Mammary epithelial cell (primary cell): ENCODE measurements at regions of chr1 and their contacts with region 1.

Region 1: DNA sequence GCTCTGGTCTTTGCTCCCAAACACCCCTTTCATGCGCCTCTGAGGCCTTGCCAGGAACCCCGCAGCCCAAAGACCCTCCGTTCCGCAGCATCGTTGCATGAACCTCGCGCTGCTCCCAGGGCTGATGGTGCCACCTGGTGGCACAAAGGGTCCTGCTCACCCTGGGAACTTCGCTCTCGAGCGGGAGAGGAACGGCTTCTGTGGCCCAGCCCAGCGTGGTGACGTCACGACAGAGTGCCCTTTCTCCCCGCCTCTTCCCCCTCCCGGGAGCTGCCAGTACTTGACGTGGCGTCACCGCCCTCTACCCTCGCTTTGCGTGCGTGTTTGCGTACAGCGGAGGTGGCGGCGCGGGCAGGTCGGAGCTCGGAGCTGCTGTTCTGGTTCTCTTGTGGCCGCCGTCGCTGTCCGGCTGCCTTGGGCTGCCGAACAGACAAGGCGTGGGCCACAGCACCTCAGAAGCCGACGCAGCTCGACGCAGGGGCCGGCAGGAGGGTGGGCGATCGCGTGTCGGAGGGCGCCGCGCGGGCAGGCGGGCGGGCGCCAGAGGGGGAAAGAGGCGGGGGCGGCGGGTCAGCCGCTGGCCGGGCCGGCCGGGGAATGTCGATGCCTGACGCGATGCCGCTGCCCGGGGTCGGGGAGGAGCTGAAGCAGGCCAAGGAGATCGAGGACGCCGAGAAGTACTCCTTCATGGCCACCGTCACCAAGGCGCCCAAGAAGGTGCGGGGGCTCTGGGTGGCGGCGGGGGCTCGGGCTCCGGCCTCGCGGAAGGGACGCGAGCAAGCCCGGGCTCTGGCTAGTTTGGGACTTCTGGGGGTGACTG is at the start of gene AHCYL1:
- DNase-seq: peak; percentile 97
- H3K4me3 ChIP-seq: peak within 1 kb of the TSS; percentile 78 to 84 (median 83)
- H3K27ac ChIP-seq: peak within 1 kb of the TSS; percentile 63
- H3K4me1 ChIP-seq: peaks cover 36% of the 10 kb centered on the region
- H3K27me3 ChIP-seq: no peaks in the 10 kb centered on the region
- CTCF ChIP-seq: peak; percentile 92 to 99
- total RNA-seq, gene AHCYL1: 71.2 to 72.2 TPM

Region 2: GRCh38 chr1:109643385-109644230 is 341.1 kb before region 1 on chr1:
- CTCF ChIA-PET with region 1: interaction called, 16 read pairs
- dilution Hi-C with region 1: no loop called
- in situ Hi-C with region 1: loop called in 1 of 2 experiments (anchors 25 kb)
- intact Hi-C with region 1: loop called (anchors 1 kb)
- DNase-seq: peak; percentile 51
- H3K4me3 ChIP-seq: no peak overlapping the region
- H3K27ac ChIP-seq: no peak overlapping the region
- H3K4me1 ChIP-seq: no peaks in the 10 kb centered on the region
- H3K27me3 ChIP-seq: no peaks in the 10 kb centered on the region
- CTCF ChIP-seq: peak; percentile 77 to 94

Region 3: DNA sequence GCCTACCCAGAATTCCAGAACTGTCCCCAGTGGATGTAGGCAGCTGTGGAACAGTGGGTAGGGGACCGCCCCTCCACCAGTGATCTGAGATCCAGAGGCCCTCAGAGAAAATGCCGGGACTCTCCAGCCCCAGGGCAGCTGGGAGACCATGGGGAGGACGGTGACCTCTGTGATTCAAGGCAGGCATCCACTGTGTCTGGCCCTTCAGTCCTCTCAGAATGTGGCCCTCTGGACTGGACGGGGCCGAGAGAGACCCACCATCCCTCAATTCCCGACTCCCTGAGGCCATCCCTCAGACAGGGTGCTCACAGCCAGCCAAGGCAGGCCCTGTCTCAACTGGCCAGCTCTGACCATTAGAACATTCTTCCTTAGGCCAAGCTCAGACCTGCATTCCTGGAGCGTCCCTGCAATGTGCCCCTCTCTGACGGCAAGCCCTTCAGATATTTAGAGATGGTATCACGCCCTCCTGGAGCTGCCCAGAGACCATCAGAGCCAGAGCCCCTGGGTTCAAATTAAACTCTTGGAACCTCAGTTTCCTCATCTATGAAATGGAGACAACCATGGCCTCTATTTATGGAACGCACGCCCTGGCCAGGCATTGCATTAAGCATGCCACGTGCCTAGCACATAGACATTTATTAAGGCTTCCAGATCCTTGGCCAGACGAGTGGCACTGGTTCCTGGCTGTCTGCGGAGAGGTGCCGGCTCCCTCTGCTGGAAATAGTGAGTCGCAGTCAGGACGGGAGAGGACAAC is 211.3 kb before region 1 on chr1:
- CTCF ChIA-PET with region 1: interaction called, 16 read pairs
- dilution Hi-C with region 1: no loop called
- in situ Hi-C with region 1: loop called (anchors 5 kb)
- intact Hi-C with region 1: loop called (anchors 1 kb)
- DNase-seq: peak; percentile 71
- H3K4me3 ChIP-seq: no peak overlapping the region
- H3K27ac ChIP-seq: no peak overlapping the region
- H3K4me1 ChIP-seq: no peaks in the 10 kb centered on the region
- H3K27me3 ChIP-seq: no peaks in the 10 kb centered on the region
- CTCF ChIP-seq: peak; percentile 93 to 97

Region 4: DNA sequence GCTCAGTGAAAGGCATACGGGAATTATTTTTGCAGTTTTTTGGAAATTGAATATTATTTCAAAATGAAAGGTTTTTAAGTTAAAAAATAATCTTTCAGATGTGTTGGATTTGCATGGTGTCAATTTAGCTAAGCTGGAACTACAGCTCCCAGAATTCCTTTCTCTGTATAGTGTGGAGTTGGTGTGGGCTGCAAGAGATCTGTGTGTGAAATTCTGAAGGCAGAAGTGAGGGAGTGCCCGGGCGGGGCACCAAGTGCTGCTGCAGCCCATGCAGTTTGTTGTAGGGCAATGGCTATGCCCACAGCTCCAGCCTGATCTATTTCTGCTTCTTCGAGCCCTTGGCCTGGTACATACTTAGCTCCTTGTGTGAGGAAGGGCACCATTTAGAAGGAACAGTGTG is 134.5 kb before region 1 on chr1:
- CTCF ChIA-PET with region 1: no interaction called
- dilution Hi-C with region 1: no loop called
- in situ Hi-C with region 1: no loop called
- intact Hi-C with region 1: loop called (anchors 5 kb)
- DNase-seq: no peak
- H3K4me3 ChIP-seq: no peak overlapping the region
- H3K27ac ChIP-seq: no peak overlapping the region
- H3K4me1 ChIP-seq: peaks cover 13% of the 10 kb centered on the region
- H3K27me3 ChIP-seq: no peaks in the 10 kb centered on the region
- CTCF ChIP-seq: no peak

Region 5: GRCh38 chr1:109923131-109923945 is 61.3 kb before region 1 on chr1:
- CTCF ChIA-PET with region 1: interaction called, 3 read pairs
- dilution Hi-C with region 1: no loop called
- in situ Hi-C with region 1: loop called in 1 of 2 experiments (anchors 10 kb)
- intact Hi-C with region 1: loop called (anchors 2 kb)
- DNase-seq: no peak
- H3K4me3 ChIP-seq: no peak overlapping the region
- H3K27ac ChIP-seq: no peak overlapping the region
- H3K4me1 ChIP-seq: peaks cover 27% of the 10 kb centered on the region
- H3K27me3 ChIP-seq: no peaks in the 10 kb centered on the region
- CTCF ChIP-seq: peak; percentile 37

Region 6: GRCh38 chr1:110011527-110012041 is 26.9 kb after region 1 on chr1:
- CTCF ChIA-PET with region 1: interaction called, 14 read pairs
- dilution Hi-C with region 1: no loop called
- in situ Hi-C with region 1: no loop called
- intact Hi-C with region 1: loop called (anchors 1 kb)
- DNase-seq: peak; percentile 54
- H3K4me3 ChIP-seq: no peak overlapping the region
- H3K27ac ChIP-seq: no peak overlapping the region
- H3K4me1 ChIP-seq: no peaks in the 10 kb centered on the region
- H3K27me3 ChIP-seq: no peaks in the 10 kb centered on the region
- CTCF ChIP-seq: peak; percentile 58 to 71